ENCODE measurements at regions of chr11 and their contacts with region 1.

Region 1: GRCh38 chr11:46657186-46657585 is 39.8 kb downstream of the ATG13 start:
- DNase-seq: no peak
- ATAC-seq: no peak
- H3K4me3 ChIP-seq: no peak overlapping the region
- H3K27ac ChIP-seq: no peak overlapping the region
- H3K4me1 ChIP-seq: no peaks in the 10 kb centered on the region
- H3K27me3 ChIP-seq: no peaks in the 10 kb centered on the region
- CTCF ChIP-seq: no peak
- EP300 ChIP-seq: no peak
- POLR2A ChIP-seq: no peak
- RAD21 ChIP-seq: no peak

Region 2: DNA sequence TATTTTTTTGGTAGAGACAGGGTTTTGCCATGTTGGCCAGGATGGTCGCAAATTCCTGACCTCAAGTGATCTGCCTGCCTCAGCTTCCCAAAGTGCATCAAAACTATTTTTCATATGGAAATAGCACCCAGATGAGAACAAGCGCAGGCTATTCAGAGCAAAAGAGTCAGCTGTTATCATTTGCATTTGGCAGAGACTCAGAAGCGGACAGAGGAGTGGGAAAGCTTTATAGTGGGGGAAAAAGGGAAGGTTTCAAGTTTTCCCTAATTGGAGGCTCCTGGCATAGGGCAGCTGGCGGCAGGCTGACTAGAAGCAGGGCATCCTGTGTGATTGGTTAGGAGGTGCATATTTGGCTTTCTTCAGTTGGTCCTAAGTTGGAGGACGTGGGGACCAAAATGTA is 19.6 kb before region 1 on chr11:
- CTCF ChIA-PET with region 1: no interaction called
- POLR2A ChIA-PET with region 1: no interaction called
- RAD21 ChIA-PET with region 1: no interaction called
- SMC1A ChIA-PET with region 1: no interaction called
- in situ Hi-C with region 1: no loop called
- intact Hi-C with region 1: no loop called
- DNase-seq: no peak
- ATAC-seq: no peak
- H3K4me3 ChIP-seq: no peak overlapping the region
- H3K27ac ChIP-seq: no peak overlapping the region
- H3K4me1 ChIP-seq: no peaks in the 10 kb centered on the region
- H3K27me3 ChIP-seq: no peaks in the 10 kb centered on the region
- CTCF ChIP-seq: no peak
- EP300 ChIP-seq: no peak
- POLR2A ChIP-seq: no peak
- RAD21 ChIP-seq: no peak

Region 3: DNA sequence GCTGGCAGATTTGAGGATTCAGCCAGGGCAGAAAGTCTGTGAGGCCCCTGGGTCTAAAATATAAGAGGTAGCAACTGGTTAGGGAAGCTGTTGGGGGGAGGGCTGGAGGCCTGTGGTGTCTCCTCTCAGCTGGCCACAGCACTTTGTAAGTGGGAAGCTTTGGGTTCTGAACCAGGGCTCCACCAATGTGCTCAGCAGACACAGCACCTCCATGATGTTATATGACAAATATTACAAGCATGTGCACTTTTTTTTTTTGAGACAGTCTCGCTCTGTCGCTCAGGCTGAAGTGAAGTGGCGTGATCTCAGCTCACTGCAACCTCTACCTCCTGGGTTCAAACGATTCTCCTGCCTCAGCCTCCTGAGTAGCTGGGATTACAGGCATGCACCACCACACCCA is 35.3 kb after region 1 on chr11:
- CTCF ChIA-PET with region 1: no interaction called
- POLR2A ChIA-PET with region 1: no interaction called
- RAD21 ChIA-PET with region 1: no interaction called
- SMC1A ChIA-PET with region 1: no interaction called
- in situ Hi-C with region 1: no loop called
- intact Hi-C with region 1: no loop called
- DNase-seq: no peak
- ATAC-seq: no peak
- H3K4me3 ChIP-seq: no peak overlapping the region
- H3K27ac ChIP-seq: no peak overlapping the region
- H3K4me1 ChIP-seq: no peaks in the 10 kb centered on the region
- H3K27me3 ChIP-seq: no peaks in the 10 kb centered on the region
- CTCF ChIP-seq: no peak
- EP300 ChIP-seq: no peak
- POLR2A ChIP-seq: no peak
- RAD21 ChIP-seq: no peak

Region 4: GRCh38 chr11:46706886-46707285 is 49.7 kb after region 1 on chr11:
- CTCF ChIA-PET with region 1: no interaction called
- POLR2A ChIA-PET with region 1: no interaction called
- RAD21 ChIA-PET with region 1: no interaction called
- SMC1A ChIA-PET with region 1: no interaction called
- in situ Hi-C with region 1: no loop called
- intact Hi-C with region 1: no loop called
- DNase-seq: no peak
- ATAC-seq: no peak
- H3K4me3 ChIP-seq: no peak overlapping the region
- H3K27ac ChIP-seq: no peak overlapping the region
- H3K4me1 ChIP-seq: peaks cover 4% of the 10 kb centered on the region
- H3K27me3 ChIP-seq: no peaks in the 10 kb centered on the region
- CTCF ChIP-seq: no peak
- EP300 ChIP-seq: no peak
- POLR2A ChIP-seq: peak; percentile 43; the same call in 1 of the 2 replicates
- RAD21 ChIP-seq: no peak

Region 5: GRCh38 chr11:46718155-46719019 is 61.2 kb after region 1 on chr11:
- CTCF ChIA-PET with region 1: no interaction called
- POLR2A ChIA-PET with region 1: interaction called, 13 read pairs
- RAD21 ChIA-PET with region 1: no interaction called
- SMC1A ChIA-PET with region 1: no interaction called
- in situ Hi-C with region 1: no loop called
- intact Hi-C with region 1: no loop called
- DNase-seq: no peak
- ATAC-seq: peak; percentile 61
- H3K4me3 ChIP-seq: no peak overlapping the region
- H3K27ac ChIP-seq: no peak overlapping the region
- H3K4me1 ChIP-seq: no peaks in the 10 kb centered on the region; the same call in 1 of the 2 replicates
- H3K27me3 ChIP-seq: no peaks in the 10 kb centered on the region
- CTCF ChIP-seq: no peak
- EP300 ChIP-seq: no peak
- POLR2A ChIP-seq: no peak
- RAD21 ChIP-seq: no peak

Region 6: DNA sequence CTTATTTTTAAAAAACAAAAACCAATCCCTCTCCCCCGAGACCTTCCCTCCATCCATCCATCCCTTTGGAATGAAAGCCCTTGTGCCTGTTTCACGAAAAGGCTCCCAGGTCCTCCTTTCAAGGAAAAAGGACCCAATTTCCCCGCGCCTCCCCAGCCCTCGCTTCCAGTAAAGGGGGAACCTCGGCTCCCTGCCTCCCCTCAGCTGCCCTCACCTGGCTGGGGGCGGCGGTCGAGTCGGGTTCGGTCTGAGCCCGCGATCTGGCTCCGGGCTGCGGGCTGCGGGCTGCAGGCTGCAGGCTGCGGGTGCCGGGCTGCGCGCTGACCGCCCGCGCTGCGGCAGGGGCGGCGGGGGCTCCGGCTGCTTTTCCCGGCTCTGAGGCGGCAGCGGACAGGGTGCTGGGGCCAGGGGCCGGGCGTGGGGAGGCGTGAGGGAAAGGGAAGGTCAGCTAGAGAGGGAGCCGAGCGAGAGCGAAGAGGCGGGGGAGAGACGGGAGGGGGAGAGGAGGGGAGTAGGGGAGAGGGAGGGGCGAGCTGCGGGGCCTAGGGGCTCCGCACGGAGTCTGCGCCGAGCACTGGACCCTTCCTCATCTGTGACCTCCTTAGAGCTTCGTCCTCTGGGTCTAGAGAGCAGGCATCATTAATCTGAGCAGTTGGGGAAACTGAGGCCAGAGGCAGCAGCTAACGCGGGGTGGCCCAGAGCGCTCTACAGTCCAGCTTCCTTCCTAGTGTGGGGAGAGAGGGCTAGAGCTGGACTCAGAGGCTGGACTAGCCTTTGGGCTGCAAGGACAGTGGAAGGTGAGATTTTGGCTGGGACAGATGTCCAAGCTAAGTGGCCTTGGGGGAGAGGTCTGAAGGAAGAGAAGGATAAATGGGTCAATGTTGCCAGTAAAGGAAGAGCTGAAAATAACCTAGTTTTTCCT is 937.0 kb after region 1 on chr11 and contains the start of gene C1QTNF4:
- CTCF ChIA-PET with region 1: no interaction called
- POLR2A ChIA-PET with region 1: no interaction called
- RAD21 ChIA-PET with region 1: no interaction called
- SMC1A ChIA-PET with region 1: no interaction called
- in situ Hi-C with region 1: no loop called
- intact Hi-C with region 1: no loop called
- DNase-seq: no peak
- ATAC-seq: no peak
- H3K4me3 ChIP-seq: no peak within 1 kb of the TSS
- H3K27ac ChIP-seq: no peak within 1 kb of the TSS
- H3K4me1 ChIP-seq: peaks cover 7% of the 10 kb centered on the region
- H3K27me3 ChIP-seq: peaks cover 3 to 23% of the 10 kb centered on the region in 2 experiments
- CTCF ChIP-seq: no peak
- EP300 ChIP-seq: no peak
- POLR2A ChIP-seq: no peak
- RAD21 ChIP-seq: no peak
- polyA plus RNA-seq, gene C1QTNF4: not detected

Measured in GM12878 (cell line).